ENCODE measurements at regions of chr5 and their contacts with region 1.

Region 1: GRCh38 chr5:69334793-69335268 is 2.2 kb upstream of the CCDC125 start:
- DNase-seq: peak; percentile 63 to 88 (median 71)
- ATAC-seq: peak; percentile 73
- H3K4me3 ChIP-seq: no peak overlapping the region
- H3K4me3 Mint-ChIP-seq: peak overlapping the region; percentile 18
- H3K27ac ChIP-seq: no peak overlapping the region
- H3K27ac Mint-ChIP-seq: peak overlapping the region; percentile 77
- H3K4me1 ChIP-seq: peaks cover 26% of the 10 kb centered on the region
- H3K4me1 Mint-ChIP-seq: peaks cover 25% of the 10 kb centered on the region
- H3K27me3 ChIP-seq: no peaks in the 10 kb centered on the region
- H3K27me3 Mint-ChIP-seq: no peaks in the 10 kb centered on the region
- CTCF ChIP-seq: peak; percentile 61

Region 2: GRCh38 chr5:67917561-67917960 is 1417.3 kb before region 1 on chr5:
- CTCF ChIA-PET with region 1: no interaction called
- POLR2A ChIA-PET with region 1: no interaction called
- intact Hi-C with region 1: no loop called
- DNase-seq: no peak
- ATAC-seq: no peak
- H3K4me3 ChIP-seq: no peak overlapping the region
- H3K4me3 Mint-ChIP-seq: no peak overlapping the region
- H3K27ac ChIP-seq: no peak overlapping the region
- H3K27ac Mint-ChIP-seq: no peak overlapping the region
- H3K4me1 ChIP-seq: no peaks in the 10 kb centered on the region
- H3K4me1 Mint-ChIP-seq: no peaks in the 10 kb centered on the region
- H3K27me3 ChIP-seq: no peaks in the 10 kb centered on the region
- H3K27me3 Mint-ChIP-seq: no peaks in the 10 kb centered on the region
- CTCF ChIP-seq: no peak

Region 3: DNA sequence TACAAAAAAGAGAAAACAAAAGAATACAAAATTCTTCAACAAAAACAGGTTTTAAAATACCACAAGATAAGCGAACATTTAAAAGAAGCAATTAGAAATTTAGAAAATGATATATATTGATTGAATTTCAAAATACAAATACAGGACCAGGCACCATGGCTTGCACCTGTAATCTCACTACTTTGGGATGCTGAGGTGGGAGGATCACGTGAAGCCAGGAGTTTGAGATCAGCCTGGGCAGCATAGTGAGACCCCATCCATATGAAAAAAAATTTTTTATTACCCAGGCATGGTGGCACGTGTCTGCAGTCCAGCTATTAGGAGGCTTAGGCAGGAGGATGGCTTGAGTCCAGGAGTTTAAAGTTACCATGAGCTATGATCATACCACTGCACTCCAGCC is 350.9 kb before region 1 on chr5:
- CTCF ChIA-PET with region 1: no interaction called
- POLR2A ChIA-PET with region 1: no interaction called
- intact Hi-C with region 1: no loop called
- DNase-seq: no peak
- ATAC-seq: no peak
- H3K4me3 ChIP-seq: no peak overlapping the region
- H3K4me3 Mint-ChIP-seq: no peak overlapping the region
- H3K27ac ChIP-seq: no peak overlapping the region
- H3K27ac Mint-ChIP-seq: no peak overlapping the region
- H3K4me1 ChIP-seq: no peaks in the 10 kb centered on the region
- H3K4me1 Mint-ChIP-seq: no peaks in the 10 kb centered on the region
- H3K27me3 ChIP-seq: peaks cover 0 to 2% of the 10 kb centered on the region in 2 experiments
- H3K27me3 Mint-ChIP-seq: peaks cover 2% of the 10 kb centered on the region
- CTCF ChIP-seq: no peak

Region 4: GRCh38 chr5:69007726-69008368 is 327.0 kb before region 1 on chr5:
- CTCF ChIA-PET with region 1: no interaction called
- POLR2A ChIA-PET with region 1: no interaction called
- intact Hi-C with region 1: no loop called
- DNase-seq: peak; percentile 51 to 75 (median 62)
- ATAC-seq: peak; percentile 88
- H3K4me3 ChIP-seq: no peak overlapping the region
- H3K4me3 Mint-ChIP-seq: no peak overlapping the region
- H3K27ac ChIP-seq: no peak overlapping the region
- H3K27ac Mint-ChIP-seq: no peak overlapping the region
- H3K4me1 ChIP-seq: no peaks in the 10 kb centered on the region
- H3K4me1 Mint-ChIP-seq: no peaks in the 10 kb centered on the region
- H3K27me3 ChIP-seq: no peaks in the 10 kb centered on the region
- H3K27me3 Mint-ChIP-seq: peaks cover 23% of the 10 kb centered on the region
- CTCF ChIP-seq: peak; percentile 83

Region 5: GRCh38 chr5:69042915-69043658 is 291.7 kb before region 1 on chr5:
- CTCF ChIA-PET with region 1: interaction called, 3 read pairs
- POLR2A ChIA-PET with region 1: interaction called, 3 read pairs
- intact Hi-C with region 1: loop called (anchors 2 kb)
- DNase-seq: peak; percentile 49 to 95 (median 76)
- ATAC-seq: peak; percentile 96
- H3K4me3 ChIP-seq: peak overlapping the region; percentile 54
- H3K4me3 Mint-ChIP-seq: peak overlapping the region; percentile 83
- H3K27ac ChIP-seq: peak overlapping the region; percentile 15 to 43
- H3K27ac Mint-ChIP-seq: peak overlapping the region; percentile 82
- H3K4me1 ChIP-seq: no peaks in the 10 kb centered on the region
- H3K4me1 Mint-ChIP-seq: no peaks in the 10 kb centered on the region
- H3K27me3 ChIP-seq: no peaks in the 10 kb centered on the region
- H3K27me3 Mint-ChIP-seq: no peaks in the 10 kb centered on the region
- CTCF ChIP-seq: peak; percentile 82

Region 6: GRCh38 chr5:69166686-69167492 is 167.9 kb before region 1 on chr5 and contains the start of gene CCNB1:
- CTCF ChIA-PET with region 1: interaction called, 3 read pairs
- POLR2A ChIA-PET with region 1: no interaction called
- intact Hi-C with region 1: loop called in 1 of 2 experiments (anchors 5 kb)
- DNase-seq: peak; percentile 92 to 98 (median 96)
- ATAC-seq: peak; percentile 100
- H3K4me3 ChIP-seq: peak within 1 kb of the TSS; percentile 80
- H3K4me3 Mint-ChIP-seq: peak within 1 kb of the TSS; percentile 93
- H3K27ac ChIP-seq: peak within 1 kb of the TSS in 1 of 2 donors; percentile 46
- H3K27ac Mint-ChIP-seq: peak within 1 kb of the TSS; percentile 73
- H3K4me1 ChIP-seq: peaks cover 16% of the 10 kb centered on the region
- H3K4me1 Mint-ChIP-seq: peaks cover 23% of the 10 kb centered on the region
- H3K27me3 ChIP-seq: no peaks in the 10 kb centered on the region
- H3K27me3 Mint-ChIP-seq: no peaks in the 10 kb centered on the region
- CTCF ChIP-seq: no peak
- total RNA-seq, gene CCNB1: 1.4 to 1.5 TPM

Region 7: GRCh38 chr5:69217548-69218526 is 117.0 kb before region 1 on chr5:
- CTCF ChIA-PET with region 1: no interaction called
- POLR2A ChIA-PET with region 1: no interaction called
- intact Hi-C with region 1: loop called in 1 of 2 experiments (anchors 5 kb)
- DNase-seq: peak; percentile 85 to 99 (median 94)
- ATAC-seq: peak; percentile 91
- H3K4me3 ChIP-seq: peak overlapping the region; percentile 89
- H3K4me3 Mint-ChIP-seq: peak overlapping the region; percentile 95
- H3K27ac ChIP-seq: peak overlapping the region; percentile 88 to 93
- H3K27ac Mint-ChIP-seq: peak overlapping the region; percentile 98
- H3K4me1 ChIP-seq: peaks cover 5% of the 10 kb centered on the region
- H3K4me1 Mint-ChIP-seq: peaks cover 36% of the 10 kb centered on the region
- H3K27me3 ChIP-seq: no peaks in the 10 kb centered on the region
- H3K27me3 Mint-ChIP-seq: no peaks in the 10 kb centered on the region
- CTCF ChIP-seq: no peak

Region 8: DNA sequence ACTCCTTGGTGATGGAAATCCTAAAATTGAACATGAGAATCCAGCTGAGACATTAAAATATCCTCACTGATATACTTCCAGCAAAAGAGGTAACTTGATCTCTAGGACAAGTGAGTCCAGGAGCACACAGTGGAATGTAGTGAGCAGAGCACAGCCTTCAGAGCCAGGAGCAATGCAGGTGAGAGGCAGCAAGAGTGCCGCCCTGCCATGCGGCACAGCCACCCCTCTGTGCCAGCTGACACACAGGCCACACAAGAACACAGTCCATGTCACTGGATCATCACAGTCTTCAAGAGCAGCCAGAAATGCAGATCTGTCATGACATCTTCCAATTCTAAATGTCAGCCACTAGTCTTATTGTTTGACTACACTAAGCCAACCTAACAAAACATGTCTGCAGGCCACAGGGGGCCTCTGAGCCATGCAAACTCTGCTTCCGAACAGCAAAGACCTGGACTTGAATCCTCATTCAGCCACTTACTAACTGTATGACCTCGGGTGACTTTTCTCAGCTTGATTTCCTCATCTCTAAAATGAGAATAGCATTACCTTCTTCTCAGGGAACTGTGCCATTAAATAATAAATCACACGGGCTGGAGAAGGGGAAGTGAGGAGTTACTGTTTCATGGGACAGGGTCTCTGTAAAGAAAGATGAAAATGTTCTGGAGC is 49.2 kb before region 1 on chr5:
- CTCF ChIA-PET with region 1: no interaction called
- POLR2A ChIA-PET with region 1: no interaction called
- intact Hi-C with region 1: loop called in 1 of 2 experiments (anchors 10 kb)
- DNase-seq: no peak
- ATAC-seq: no peak
- H3K4me3 ChIP-seq: no peak overlapping the region
- H3K4me3 Mint-ChIP-seq: no peak overlapping the region
- H3K27ac ChIP-seq: no peak overlapping the region
- H3K27ac Mint-ChIP-seq: no peak overlapping the region
- H3K4me1 ChIP-seq: no peaks in the 10 kb centered on the region
- H3K4me1 Mint-ChIP-seq: no peaks in the 10 kb centered on the region
- H3K27me3 ChIP-seq: no peaks in the 10 kb centered on the region
- H3K27me3 Mint-ChIP-seq: no peaks in the 10 kb centered on the region
- CTCF ChIP-seq: no peak

Region 9: DNA sequence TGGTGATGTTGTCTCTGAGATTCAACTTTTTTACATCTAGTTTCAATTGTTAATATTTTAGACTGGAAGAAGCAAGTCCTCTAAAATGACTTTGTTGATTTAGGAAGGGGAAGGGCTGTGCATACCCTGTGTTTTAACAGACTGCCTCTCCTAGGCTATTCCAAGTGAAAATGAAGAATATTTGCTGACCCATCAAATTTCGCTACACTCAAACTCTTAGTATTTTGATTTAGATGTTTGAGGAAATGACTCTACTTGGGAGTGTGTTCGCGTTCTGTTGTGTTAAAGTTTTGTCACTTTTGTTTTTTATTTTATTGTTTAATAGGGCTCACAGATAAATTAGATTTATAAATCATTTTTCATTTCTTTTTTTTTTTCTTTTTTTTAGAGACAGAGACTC is 83.7 kb after region 1 on chr5:
- CTCF ChIA-PET with region 1: no interaction called
- POLR2A ChIA-PET with region 1: no interaction called
- intact Hi-C with region 1: no loop called
- DNase-seq: no peak
- ATAC-seq: no peak
- H3K4me3 ChIP-seq: no peak overlapping the region
- H3K4me3 Mint-ChIP-seq: no peak overlapping the region
- H3K27ac ChIP-seq: no peak overlapping the region
- H3K27ac Mint-ChIP-seq: no peak overlapping the region
- H3K4me1 ChIP-seq: peaks cover 5% of the 10 kb centered on the region
- H3K4me1 Mint-ChIP-seq: peaks cover 16% of the 10 kb centered on the region
- H3K27me3 ChIP-seq: no peaks in the 10 kb centered on the region
- H3K27me3 Mint-ChIP-seq: no peaks in the 10 kb centered on the region
- CTCF ChIP-seq: no peak

Measured in CD4-positive, alpha-beta T cell (primary cell).